ENCODE measurements at regions of chr22 and their contacts with region 1.

Region 1: GRCh38 chr22:23849009-23850006 is 8.4 kb upstream of the SLC2A11 start:
- DNase-seq: peak; percentile 88
- H3K4me3 Mint-ChIP-seq: no peak overlapping the region
- H3K27ac Mint-ChIP-seq: no peak overlapping the region
- H3K4me1 Mint-ChIP-seq: peaks cover 2% of the 10 kb centered on the region
- H3K27me3 Mint-ChIP-seq: peaks cover 3% of the 10 kb centered on the region

Region 2: GRCh38 chr22:23622634-23623033 is 226.7 kb before region 1 on chr22:
- CTCF ChIA-PET with region 1: interaction called, 3 read pairs
- intact Hi-C with region 1: loop called (anchors 5 kb)
- DNase-seq: no peak
- H3K4me3 Mint-ChIP-seq: no peak overlapping the region
- H3K27ac Mint-ChIP-seq: no peak overlapping the region
- H3K4me1 Mint-ChIP-seq: no peaks in the 10 kb centered on the region
- H3K27me3 Mint-ChIP-seq: no peaks in the 10 kb centered on the region

Measured in activated naive CD4-positive, alpha-beta T cell treated with anti-CD3 and anti-CD28 coated beads for 36 hours (primary cell).